Naive thymus-derived CD4-positive, alpha-beta T cell (primary cell): ENCODE measurements at regions of chr11 and their contacts with region 1.

Region 1: GRCh38 chr11:18115360-18116127 is 9.7 kb upstream of the SAAL1 start:
- DNase-seq: peak; percentile 37 to 67 (median 63)
- ATAC-seq: peak; percentile 92
- H3K4me3 ChIP-seq: no peak overlapping the region
- H3K4me3 Mint-ChIP-seq: no peak overlapping the region
- H3K27ac ChIP-seq: no peak overlapping the region
- H3K27ac Mint-ChIP-seq: no peak overlapping the region
- H3K4me1 ChIP-seq: no peaks in the 10 kb centered on the region
- H3K4me1 Mint-ChIP-seq: peaks cover 0 to 5% (median 0%) of the 10 kb centered on the region in 7 donors
- H3K27me3 ChIP-seq: no peaks in the 10 kb centered on the region
- H3K27me3 Mint-ChIP-seq: peaks cover 17 to 40% (median 29%) of the 10 kb centered on the region in 5 donors

Region 2: DNA sequence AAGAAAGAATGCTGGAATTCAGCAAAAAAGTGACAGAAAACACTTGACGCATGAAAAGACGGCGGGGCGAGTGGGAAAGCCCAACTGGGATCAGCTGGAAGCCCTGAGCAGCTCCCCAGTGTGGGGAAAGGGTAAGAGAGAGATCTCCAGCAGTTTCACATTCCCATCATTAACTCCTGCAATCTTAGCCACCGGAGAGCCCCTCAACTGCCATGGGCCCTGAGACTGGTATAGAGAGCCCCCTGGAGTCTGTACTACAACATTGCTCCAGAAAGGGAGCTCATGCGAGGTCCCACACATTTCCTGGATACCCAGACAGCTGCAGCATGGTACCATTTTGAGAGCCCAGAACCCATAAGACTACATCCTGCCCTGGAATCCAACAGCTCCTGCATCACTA is 88.2 kb after region 1 on chr11:
- CTCF ChIA-PET with region 1: no interaction called
- POLR2A ChIA-PET with region 1: no interaction called
- intact Hi-C with region 1: loop called in 1 of 2 experiments (anchors 2 kb)
- DNase-seq: no peak
- ATAC-seq: no peak
- H3K4me3 ChIP-seq: no peak overlapping the region
- H3K4me3 Mint-ChIP-seq: no peak overlapping the region
- H3K27ac ChIP-seq: no peak overlapping the region
- H3K27ac Mint-ChIP-seq: no peak overlapping the region
- H3K4me1 ChIP-seq: no peaks in the 10 kb centered on the region
- H3K4me1 Mint-ChIP-seq: no peaks in the 10 kb centered on the region
- H3K27me3 ChIP-seq: no peaks in the 10 kb centered on the region
- H3K27me3 Mint-ChIP-seq: peaks cover 52 to 74% (median 58%) of the 10 kb centered on the region in 5 donors

Region 3: DNA sequence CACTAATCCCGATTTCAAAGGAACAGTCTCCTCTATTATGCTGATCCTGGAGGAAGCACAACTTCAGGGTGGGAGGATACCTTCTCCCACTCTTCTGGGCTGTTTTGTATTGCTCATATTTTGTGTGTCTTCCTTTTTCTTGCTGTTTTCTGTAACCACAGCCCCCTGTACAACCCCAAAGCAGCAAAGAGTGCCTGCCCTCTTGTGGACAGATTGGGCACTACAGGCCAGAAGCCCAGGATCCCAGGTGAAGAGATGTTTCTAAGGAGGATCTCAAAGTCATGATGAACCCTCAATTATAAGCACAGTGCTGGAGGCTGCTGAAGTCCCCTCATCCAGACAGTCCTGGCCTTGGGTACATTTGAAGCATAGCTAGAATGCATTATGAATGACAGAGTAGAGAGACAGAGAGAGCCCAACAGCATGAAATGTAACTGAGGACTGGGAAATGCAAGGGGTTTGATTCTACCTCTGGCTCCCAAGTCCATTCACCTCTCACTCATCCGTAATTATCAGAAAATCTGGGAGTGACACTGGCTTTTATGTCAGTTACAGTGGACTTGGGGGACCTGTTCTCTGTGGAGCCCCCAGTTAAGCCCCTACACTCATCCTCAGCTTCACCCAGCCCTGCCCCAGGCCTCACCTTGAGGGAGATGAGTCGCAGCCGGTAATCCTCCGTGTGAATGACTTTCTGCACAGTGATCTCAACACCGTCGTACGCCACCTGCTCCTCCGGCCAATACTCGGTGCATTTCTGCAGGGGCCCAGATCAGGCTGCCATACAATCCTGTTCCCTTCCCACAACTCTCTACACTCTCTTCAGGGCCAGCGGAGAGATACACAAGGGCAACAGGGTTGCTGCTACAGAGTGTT is 616.6 kb after region 1 on chr11:
- CTCF ChIA-PET with region 1: interaction called, 4 read pairs
- POLR2A ChIA-PET with region 1: no interaction called
- intact Hi-C with region 1: loop called (anchors 1 to 2 kb)
- DNase-seq: peak; percentile 44 to 81 (median 65)
- ATAC-seq: peak; percentile 79
- H3K4me3 ChIP-seq: no peak overlapping the region
- H3K4me3 Mint-ChIP-seq: no peak overlapping the region
- H3K27ac ChIP-seq: no peak overlapping the region
- H3K27ac Mint-ChIP-seq: peak overlapping the region in 1 of 9 donors; percentile 32
- H3K4me1 ChIP-seq: peaks cover 5 to 6% of the 10 kb centered on the region in 2 donors
- H3K4me1 Mint-ChIP-seq: peaks cover 4 to 15% (median 13%) of the 10 kb centered on the region in 7 donors
- H3K27me3 ChIP-seq: no peaks in the 10 kb centered on the region
- H3K27me3 Mint-ChIP-seq: peaks cover 0 to 9% (median 0%) of the 10 kb centered on the region in 5 donors

Region 4: DNA sequence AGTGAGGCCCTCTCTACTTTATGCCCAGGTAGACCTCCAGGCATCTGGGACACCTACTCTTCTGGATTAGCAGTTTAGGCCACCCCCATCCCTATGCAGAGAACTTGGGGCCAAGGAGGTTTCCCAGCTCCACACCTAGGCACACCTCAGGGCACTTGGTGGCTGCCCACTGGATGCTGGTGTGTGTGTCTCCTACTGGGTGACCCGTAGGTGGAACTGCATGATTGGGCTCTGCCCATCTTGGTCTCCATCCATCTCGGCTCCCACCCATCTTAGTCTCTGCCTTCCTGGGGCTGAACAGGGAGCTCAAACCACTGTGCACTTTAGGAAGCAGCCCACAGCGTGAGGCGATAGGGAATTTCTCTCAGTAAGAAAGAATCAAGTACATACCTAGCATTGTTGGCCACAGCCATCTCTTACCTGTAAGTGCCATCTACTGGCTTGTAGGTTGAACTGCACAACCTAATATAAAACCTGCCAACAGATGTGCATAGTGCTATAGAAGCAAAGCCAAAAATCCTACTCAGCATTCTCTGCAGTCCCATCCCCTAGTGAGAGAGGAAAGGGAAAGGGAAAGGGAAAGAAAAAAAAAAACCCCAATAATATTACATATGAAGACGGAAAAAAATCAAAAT is 737.7 kb after region 1 on chr11:
- CTCF ChIA-PET with region 1: no interaction called
- POLR2A ChIA-PET with region 1: no interaction called
- intact Hi-C with region 1: loop called in 1 of 2 experiments (anchors 2 kb)
- DNase-seq: no peak
- ATAC-seq: no peak
- H3K4me3 ChIP-seq: no peak overlapping the region
- H3K4me3 Mint-ChIP-seq: no peak overlapping the region
- H3K27ac ChIP-seq: no peak overlapping the region
- H3K27ac Mint-ChIP-seq: no peak overlapping the region
- H3K4me1 ChIP-seq: no peaks in the 10 kb centered on the region
- H3K4me1 Mint-ChIP-seq: no peaks in the 10 kb centered on the region
- H3K27me3 ChIP-seq: no peaks in the 10 kb centered on the region
- H3K27me3 Mint-ChIP-seq: peaks cover 23 to 45% (median 31%) of the 10 kb centered on the region in 5 donors